IMR-90 (cell line): ENCODE measurements at regions of chr22 and their contacts with region 1.

Region 1: GRCh38 chr22:24727218-24727851 is 47.2 kb downstream of the PIWIL3 start:
- DNase-seq: peak; percentile 94
- ATAC-seq: peak; percentile 81
- H3K4me3 ChIP-seq: no peak overlapping the region
- H3K27ac ChIP-seq: no peak overlapping the region
- H3K4me1 ChIP-seq: peaks cover 12% of the 10 kb centered on the region
- H3K27me3 ChIP-seq: no peaks in the 10 kb centered on the region
- CTCF ChIP-seq: no peak
- POLR2A ChIP-seq: no peak
- RAD21 ChIP-seq: no peak

Region 2: DNA sequence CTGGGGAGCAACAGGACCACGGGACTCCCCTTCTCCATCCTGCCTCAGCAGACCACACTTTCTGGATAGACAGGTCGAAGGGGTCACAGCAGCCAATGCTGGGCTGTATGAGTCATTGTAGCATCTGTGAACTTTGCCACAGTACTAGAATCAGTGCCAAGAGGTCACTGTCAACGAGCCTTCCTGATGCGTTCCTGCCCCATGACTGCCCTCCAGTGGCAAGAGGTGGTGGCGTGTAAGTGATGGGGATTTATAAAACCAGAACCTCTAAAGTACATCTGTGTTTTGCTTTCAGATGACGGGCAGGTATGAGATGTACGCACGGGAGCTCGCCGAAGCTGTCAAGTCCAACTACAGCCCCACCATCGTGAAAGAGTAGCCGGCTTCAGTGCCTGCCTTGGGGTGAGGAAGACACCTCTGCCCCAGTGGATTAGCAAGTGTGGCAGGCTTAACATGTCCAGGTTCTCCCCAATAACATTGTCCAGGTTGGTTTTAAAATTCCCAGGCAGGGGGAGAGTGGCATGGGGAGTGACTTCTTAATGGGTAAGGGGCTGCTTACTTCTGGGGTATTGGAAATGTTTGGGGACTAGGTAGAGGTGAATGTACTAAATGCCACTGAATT is 201.8 kb before region 1 on chr22:
- CTCF ChIA-PET with region 1: no interaction called
- POLR2A ChIA-PET with region 1: no interaction called
- dilution Hi-C with region 1: no loop called
- in situ Hi-C with region 1: no loop called
- intact Hi-C with region 1: no loop called
- DNase-seq: peak; percentile 65
- ATAC-seq: peak; percentile 94
- H3K4me3 ChIP-seq: no peak overlapping the region
- H3K27ac ChIP-seq: no peak overlapping the region
- H3K4me1 ChIP-seq: peaks cover 2% of the 10 kb centered on the region; the same call in 1 of the 2 replicates
- H3K27me3 ChIP-seq: no peaks in the 10 kb centered on the region; the same call in 1 of the 2 replicates
- CTCF ChIP-seq: peak; percentile 86
- POLR2A ChIP-seq: no peak
- RAD21 ChIP-seq: peak; percentile 90

Region 3: GRCh38 chr22:24576778-24577177 is 150.6 kb before region 1 on chr22:
- CTCF ChIA-PET with region 1: no interaction called
- POLR2A ChIA-PET with region 1: interaction called, 10 read pairs
- dilution Hi-C with region 1: no loop called
- in situ Hi-C with region 1: no loop called
- intact Hi-C with region 1: no loop called
- DNase-seq: no peak
- ATAC-seq: no peak
- H3K4me3 ChIP-seq: no peak overlapping the region
- H3K27ac ChIP-seq: no peak overlapping the region
- H3K4me1 ChIP-seq: peaks cover 14% of the 10 kb centered on the region
- H3K27me3 ChIP-seq: no peaks in the 10 kb centered on the region
- CTCF ChIP-seq: no peak
- POLR2A ChIP-seq: no peak
- RAD21 ChIP-seq: no peak

Region 4: GRCh38 chr22:24703101-24703500 is 24.2 kb before region 1 on chr22:
- CTCF ChIA-PET with region 1: no interaction called
- POLR2A ChIA-PET with region 1: no interaction called
- dilution Hi-C with region 1: no loop called
- in situ Hi-C with region 1: no loop called
- intact Hi-C with region 1: loop called (anchors 2 kb)
- DNase-seq: peak; percentile 74
- ATAC-seq: peak; percentile 66
- H3K4me3 ChIP-seq: no peak overlapping the region
- H3K27ac ChIP-seq: no peak overlapping the region
- H3K4me1 ChIP-seq: peaks cover 10% of the 10 kb centered on the region
- H3K27me3 ChIP-seq: no peaks in the 10 kb centered on the region
- CTCF ChIP-seq: no peak
- POLR2A ChIP-seq: no peak
- RAD21 ChIP-seq: no peak

Region 5: GRCh38 chr22:24751518-24751917 is 24.2 kb after region 1 on chr22:
- CTCF ChIA-PET with region 1: no interaction called
- POLR2A ChIA-PET with region 1: no interaction called
- dilution Hi-C with region 1: no loop called
- in situ Hi-C with region 1: no loop called
- intact Hi-C with region 1: loop called (anchors 2 kb)
- DNase-seq: no peak
- ATAC-seq: no peak
- H3K4me3 ChIP-seq: no peak overlapping the region
- H3K27ac ChIP-seq: no peak overlapping the region
- H3K4me1 ChIP-seq: no peaks in the 10 kb centered on the region
- H3K27me3 ChIP-seq: peaks cover 7% of the 10 kb centered on the region
- CTCF ChIP-seq: no peak
- POLR2A ChIP-seq: no peak
- RAD21 ChIP-seq: no peak